WTC11 (cell line): ENCODE measurements at regions of chrX and their contacts with region 1.

Region 1: DNA sequence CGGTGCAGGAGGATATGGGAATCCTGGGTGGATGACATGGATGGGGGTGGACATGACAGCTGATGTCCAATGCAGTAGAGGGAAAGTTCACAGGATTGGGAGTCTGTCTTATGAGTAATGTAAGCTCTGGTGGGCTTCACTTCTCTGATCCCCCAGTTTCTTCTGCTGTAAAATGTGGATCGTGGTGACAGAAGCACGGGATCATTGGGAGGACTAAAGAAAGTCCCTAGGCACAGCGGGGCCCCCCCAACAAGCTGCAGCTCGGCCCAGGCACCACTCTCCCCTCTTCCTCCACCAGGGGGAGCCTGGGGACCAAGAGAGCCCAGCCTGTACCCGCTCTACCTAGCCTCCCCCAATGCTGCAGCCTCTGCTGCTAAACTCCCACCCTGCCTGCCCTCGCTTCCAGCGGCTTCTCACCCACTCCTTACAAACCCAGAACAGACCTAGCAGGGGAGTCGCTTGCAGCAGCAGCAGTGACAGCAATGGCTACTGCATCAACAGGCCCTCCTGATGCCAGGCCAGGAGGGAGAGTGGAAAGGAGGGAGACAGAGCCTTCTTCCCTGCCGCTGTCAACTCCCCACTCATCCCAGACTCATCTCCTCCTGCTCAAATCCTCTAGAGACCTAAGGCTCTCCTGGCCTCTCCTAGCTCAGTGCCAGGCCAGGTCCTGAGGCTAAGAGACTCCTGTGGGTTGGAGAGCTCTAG is 36.1 kb upstream of the IQSEC2 start:
- DNase-seq: peak; percentile 77
- ATAC-seq: peak; percentile 64
- H3K4me3 Mint-ChIP-seq: peak overlapping the region; percentile 92
- H3K27ac Mint-ChIP-seq: no peak overlapping the region
- H3K4me1 Mint-ChIP-seq: peaks cover 57% of the 10 kb centered on the region
- H3K27me3 Mint-ChIP-seq: peaks cover 15% of the 10 kb centered on the region
- CTCF ChIP-seq: peak; percentile 56

Region 2: GRCh38 chrX:53065086-53065485 is 252.4 kb before region 1 on chrX:
- CTCF ChIA-PET with region 1: no interaction called
- POLR2A ChIA-PET with region 1: no interaction called
- DNase-seq: no peak
- ATAC-seq: no peak
- H3K4me3 Mint-ChIP-seq: no peak overlapping the region
- H3K27ac Mint-ChIP-seq: no peak overlapping the region
- H3K4me1 Mint-ChIP-seq: no peaks in the 10 kb centered on the region
- H3K27me3 Mint-ChIP-seq: no peaks in the 10 kb centered on the region
- CTCF ChIP-seq: no peak

Region 3: DNA sequence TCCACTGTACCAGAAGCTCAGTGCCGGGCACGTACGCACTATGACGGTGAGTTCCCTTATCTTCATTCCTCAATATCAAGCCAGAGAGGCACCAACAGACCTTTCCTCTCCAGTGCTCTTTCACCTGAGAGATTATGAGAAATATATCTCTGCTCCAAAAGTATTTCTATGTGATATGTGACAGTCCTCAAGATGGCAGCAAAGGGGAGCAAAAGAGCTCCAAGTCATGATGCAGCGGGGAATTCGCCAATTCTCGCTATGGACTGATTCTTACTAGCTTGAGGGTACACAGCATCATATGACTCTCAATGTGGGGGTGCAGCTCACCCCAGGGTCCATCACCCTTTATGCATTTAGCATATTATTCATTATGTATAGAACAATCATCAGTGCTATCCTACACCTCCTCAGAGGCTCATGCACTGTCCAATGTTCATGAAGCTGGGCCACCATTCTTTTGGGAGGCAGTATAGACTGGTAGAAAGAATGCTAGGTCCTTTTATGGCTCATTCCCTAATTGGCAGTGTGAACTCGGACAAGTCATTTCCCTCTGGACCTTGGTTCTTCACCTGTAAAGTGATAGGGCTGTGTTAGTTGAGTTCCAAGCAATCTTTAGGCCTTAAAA is 23.4 kb before region 1 on chrX:
- CTCF ChIA-PET with region 1: interaction called, 11 read pairs
- POLR2A ChIA-PET with region 1: no interaction called
- DNase-seq: no peak
- ATAC-seq: no peak
- H3K4me3 Mint-ChIP-seq: no peak overlapping the region
- H3K27ac Mint-ChIP-seq: no peak overlapping the region
- H3K4me1 Mint-ChIP-seq: peaks cover 15% of the 10 kb centered on the region
- H3K27me3 Mint-ChIP-seq: no peaks in the 10 kb centered on the region
- CTCF ChIP-seq: no peak

Region 4: DNA sequence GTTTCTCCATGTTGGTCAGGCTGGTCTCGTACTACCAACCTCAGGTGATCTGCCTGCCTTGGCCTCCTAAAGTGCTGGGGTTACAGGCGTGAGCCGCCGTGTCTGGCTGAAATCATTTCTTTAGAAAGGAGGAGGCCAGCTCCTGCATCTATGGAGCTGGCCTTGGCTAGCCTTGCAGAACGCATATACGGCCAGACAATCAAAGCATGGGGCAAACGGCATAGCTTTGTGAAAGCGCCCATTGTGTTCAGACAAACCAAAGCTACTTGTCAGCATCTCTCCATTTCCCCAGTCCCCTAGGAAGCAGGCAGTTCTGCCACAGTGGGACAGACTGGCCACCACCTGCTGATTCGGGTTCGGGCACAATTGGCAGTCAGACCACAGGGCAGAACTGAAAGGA is 12.8 kb after region 1 on chrX:
- CTCF ChIA-PET with region 1: interaction called, 81 read pairs
- POLR2A ChIA-PET with region 1: no interaction called
- DNase-seq: no peak
- ATAC-seq: no peak
- H3K4me3 Mint-ChIP-seq: no peak overlapping the region
- H3K27ac Mint-ChIP-seq: no peak overlapping the region
- H3K4me1 Mint-ChIP-seq: peaks cover 30% of the 10 kb centered on the region
- H3K27me3 Mint-ChIP-seq: peaks cover 5% of the 10 kb centered on the region
- CTCF ChIP-seq: no peak

Region 5: GRCh38 chrX:53422086-53422860 is 104.8 kb after region 1 on chrX and contains the start of gene SMC1A:
- CTCF ChIA-PET with region 1: interaction called, 14 read pairs
- POLR2A ChIA-PET with region 1: interaction called, 15 read pairs
- DNase-seq: peak; percentile 95
- ATAC-seq: peak; percentile 91
- H3K4me3 Mint-ChIP-seq: peak within 1 kb of the TSS; percentile 96
- H3K27ac Mint-ChIP-seq: peak within 1 kb of the TSS; percentile 100
- H3K4me1 Mint-ChIP-seq: peaks cover 14% of the 10 kb centered on the region
- H3K27me3 Mint-ChIP-seq: no peaks in the 10 kb centered on the region
- CTCF ChIP-seq: no peak
- total RNA-seq, gene SMC1A: 87.4 to 98.7 TPM (median 89.3 TPM) in 3 replicates

Region 6: DNA sequence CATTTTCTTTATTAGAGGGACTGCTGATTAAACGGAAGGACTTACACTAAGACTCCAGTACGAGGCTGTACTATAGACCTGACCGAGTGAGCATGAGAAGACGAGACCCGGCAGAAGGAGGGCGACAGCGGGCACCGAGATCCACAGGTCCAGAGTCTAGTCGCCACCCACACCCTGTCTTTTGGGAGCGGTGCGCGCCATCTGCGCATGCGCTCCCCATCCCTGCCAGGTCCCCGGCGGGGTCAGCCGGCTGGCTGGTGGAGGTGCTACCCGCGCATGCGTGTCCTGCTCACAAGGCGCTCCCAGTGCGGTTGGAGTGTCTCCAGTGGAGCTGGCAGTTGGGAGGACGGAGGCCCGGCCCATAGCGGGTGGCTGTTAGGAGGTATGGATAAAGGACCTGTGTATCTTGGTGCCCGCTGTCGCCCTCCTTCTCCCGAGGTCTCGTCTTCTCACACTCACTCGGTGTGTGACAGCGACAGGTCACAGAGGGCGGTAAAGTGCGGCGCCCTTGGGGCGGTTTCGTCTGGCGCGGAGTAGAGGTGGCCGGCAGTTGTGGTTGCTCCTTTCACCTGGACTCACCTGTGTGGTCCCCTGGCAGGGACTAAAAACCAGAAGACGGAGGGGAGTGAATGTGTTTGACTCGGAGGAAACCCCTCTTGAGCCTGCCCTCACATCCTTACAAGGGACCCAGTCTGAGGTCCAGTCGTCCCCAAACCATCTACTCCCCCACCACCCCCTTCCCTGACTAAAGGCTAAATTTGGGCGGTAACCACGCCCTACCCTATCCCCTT is 124.2 kb after region 1 on chrX:
- CTCF ChIA-PET with region 1: interaction called, 63 read pairs
- POLR2A ChIA-PET with region 1: interaction called, 3 read pairs
- DNase-seq: peak; percentile 82
- ATAC-seq: peak; percentile 91
- H3K4me3 Mint-ChIP-seq: peak overlapping the region; percentile 69
- H3K27ac Mint-ChIP-seq: no peak overlapping the region
- H3K4me1 Mint-ChIP-seq: peaks cover 4% of the 10 kb centered on the region
- H3K27me3 Mint-ChIP-seq: peaks cover 21% of the 10 kb centered on the region
- CTCF ChIP-seq: no peak